ENCODE measurements at regions of chr11 and their contacts with region 1.

Region 1: DNA sequence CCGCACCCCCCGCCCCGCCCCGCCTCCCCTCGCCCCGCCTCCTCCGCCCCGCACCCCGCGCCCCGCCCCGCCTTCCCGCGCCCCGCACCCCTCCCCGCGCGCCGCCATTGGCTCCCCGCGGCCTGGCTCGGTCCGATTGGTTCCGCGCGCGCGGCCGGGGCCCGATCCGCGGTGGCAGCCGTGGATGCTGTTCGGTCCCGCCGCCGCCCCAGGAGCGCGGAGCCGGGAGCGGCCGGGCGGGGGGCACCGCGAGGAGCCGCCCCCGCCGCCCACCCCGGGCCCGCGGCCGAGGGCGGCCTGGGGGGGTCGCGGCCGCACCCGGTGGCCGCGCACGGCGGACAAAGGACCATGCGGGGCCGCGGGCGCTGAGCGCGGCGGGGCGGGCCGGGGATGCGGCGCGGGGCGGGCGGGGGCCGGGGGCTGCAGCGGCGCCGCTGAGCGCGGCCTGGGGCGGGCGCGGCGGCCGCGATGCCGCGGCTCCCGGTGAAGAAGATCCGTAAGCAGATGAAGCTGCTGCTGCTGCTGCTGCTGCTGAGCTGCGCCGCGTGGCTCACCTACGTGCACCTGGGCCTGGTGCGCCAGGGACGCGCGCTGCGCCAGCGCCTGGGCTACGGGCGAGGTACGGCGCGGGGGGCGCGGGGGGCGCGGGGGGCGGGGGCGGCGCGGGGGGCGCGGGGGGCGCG is at the start of gene B4GALNT4:
- DNase-seq: no peak
- H3K4me3 ChIP-seq: peak within 1 kb of the TSS; percentile 35 to 49
- H3K27ac ChIP-seq: no peak within 1 kb of the TSS
- H3K4me1 ChIP-seq: peaks cover 8% of the 10 kb centered on the region
- H3K27me3 ChIP-seq: no peaks in the 10 kb centered on the region
- CTCF ChIP-seq: no peak
- POLR2A ChIP-seq: no peak
- total RNA-seq, gene B4GALNT4: 15.5 TPM

Region 2: DNA sequence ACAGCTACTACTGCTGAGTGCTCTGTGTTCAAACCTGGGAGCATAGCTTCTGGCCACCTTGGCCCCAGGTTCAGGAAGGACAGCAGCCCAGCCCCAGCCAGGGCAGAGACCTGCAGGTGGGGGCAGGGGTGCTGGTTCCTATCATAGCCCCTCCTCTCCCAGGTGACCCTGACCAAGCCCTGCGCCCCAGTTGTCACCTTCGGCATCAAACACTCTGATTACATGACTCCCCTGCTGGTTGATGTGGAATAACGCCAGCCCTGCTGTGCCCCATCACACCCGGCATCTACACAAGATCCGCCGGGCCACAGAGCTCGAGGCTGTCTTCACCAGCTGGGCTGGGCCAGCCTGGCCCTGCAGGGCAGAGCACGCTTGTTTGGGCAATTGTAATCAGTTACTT is 169.7 kb before region 1 on chr11:
- intact Hi-C with region 1: loop called (anchors 5 kb)
- DNase-seq: no peak
- H3K4me3 ChIP-seq: no peak overlapping the region
- H3K27ac ChIP-seq: no peak overlapping the region
- H3K4me1 ChIP-seq: peaks cover 16% of the 10 kb centered on the region
- H3K27me3 ChIP-seq: no peaks in the 10 kb centered on the region
- CTCF ChIP-seq: no peak
- POLR2A ChIP-seq: no peak